ENCODE measurements at regions of chr6 and their contacts with region 1.

Region 1: GRCh38 chr6:159104163-159104925 is 59.6 kb upstream of the TAGAP start:
- DNase-seq: peak; percentile 57
- ATAC-seq: peak; percentile 85 to 91

Region 2: GRCh38 chr6:158718461-158719046 is 385.8 kb before region 1 on chr6:
- intact Hi-C with region 1: loop called in 1 of 2 experiments (anchors 10 kb)
- DNase-seq: no peak
- ATAC-seq: peak; percentile 39 to 59

Region 3: GRCh38 chr6:158784505-158784904 is 319.8 kb before region 1 on chr6:
- intact Hi-C with region 1: no loop called
- DNase-seq: no peak
- ATAC-seq: no peak

Region 4: GRCh38 chr6:158999666-159000403 is 104.5 kb before region 1 on chr6 and contains the start of gene RSPH3:
- intact Hi-C with region 1: loop called in 1 of 2 experiments (anchors 10 kb)
- DNase-seq: peak; percentile 94
- ATAC-seq: peak; percentile 96 to 97
- total RNA-seq, gene RSPH3: 9.1 to 10.1 TPM

Region 5: DNA sequence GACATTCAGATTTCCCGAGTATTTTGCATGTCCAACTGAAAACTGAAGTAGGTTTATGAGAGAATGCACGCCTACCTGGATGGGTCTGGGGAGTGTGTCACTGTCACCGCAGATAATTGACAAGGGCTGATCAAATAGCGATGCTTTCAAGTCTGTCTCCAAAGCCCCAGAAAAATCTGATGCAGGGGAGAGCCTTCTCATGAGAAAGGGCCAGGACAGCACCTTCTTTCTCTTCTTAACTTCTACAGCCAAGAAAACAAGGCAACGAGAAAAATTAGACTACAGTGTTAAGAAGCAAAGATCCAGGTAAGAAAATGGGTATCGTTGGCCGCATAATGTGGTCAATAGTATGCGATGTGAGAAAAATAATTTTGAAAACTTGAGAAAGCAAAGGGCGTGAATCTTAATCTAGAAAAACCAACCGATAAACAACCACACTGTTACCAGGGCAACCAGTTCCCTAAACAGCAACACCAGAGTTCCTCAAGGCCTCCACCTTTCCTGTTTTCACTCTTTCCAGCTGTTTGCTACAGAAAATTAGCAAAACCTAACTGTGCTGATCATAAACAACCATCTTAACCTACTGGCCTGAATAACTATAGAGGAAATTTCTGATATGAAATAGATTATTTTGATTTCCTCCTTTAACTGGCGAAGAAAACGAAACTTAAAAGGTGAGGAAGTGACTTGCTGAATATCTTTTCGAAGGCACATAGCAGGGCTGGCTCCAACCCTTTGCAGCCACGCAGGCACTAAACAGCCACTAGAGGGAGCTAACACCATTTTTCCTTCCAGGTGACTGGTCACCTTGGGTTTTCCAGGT is 62.1 kb before region 1 on chr6:
- intact Hi-C with region 1: loop called (anchors 5 kb)
- DNase-seq: peak; percentile 44
- ATAC-seq: peak; percentile 75 to 76

Region 6: DNA sequence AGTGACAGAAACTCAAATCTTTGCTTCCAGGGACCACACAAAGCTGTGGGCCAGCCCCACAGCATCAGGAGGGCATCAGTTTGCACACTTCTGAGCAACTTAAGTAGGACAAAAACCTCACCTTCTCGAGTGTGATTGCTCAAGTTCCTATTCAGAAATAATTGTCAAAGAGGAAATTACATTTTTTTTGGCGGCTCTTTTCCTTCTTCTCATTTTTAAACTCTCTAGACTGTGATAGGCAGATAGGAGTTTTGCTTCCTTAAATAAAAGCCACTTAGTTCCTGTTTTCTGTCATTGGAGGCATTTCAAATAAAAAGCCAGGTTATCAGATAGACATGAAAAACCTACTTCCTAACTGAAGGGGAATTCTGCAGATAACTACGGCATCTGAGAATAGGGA is 48.3 kb before region 1 on chr6:
- intact Hi-C with region 1: no loop called
- DNase-seq: no peak
- ATAC-seq: peak in 1 of 2 donors; percentile 27